Transverse colon (tissue), 4 donors: ENCODE measurements at regions of chr12 and their contacts with region 1.

Region 1: GRCh38 chr12:48973941-48974673 is 2.6 kb upstream of the WNT10B start:
- DNase-seq: no peak
- H3K4me3 ChIP-seq: no peak overlapping the region
- H3K27ac ChIP-seq: no peak overlapping the region
- H3K4me1 ChIP-seq: peaks cover 20 to 54% (median 45%) of the 10 kb centered on the region in 4 donors
- H3K27me3 ChIP-seq: peaks cover 97% of the 10 kb centered on the region
- CTCF ChIP-seq: peak; percentile 49 to 71 (median 58)
- EP300 ChIP-seq: no peak
- POLR2A ChIP-seq: no peak

Region 2: GRCh38 chr12:48954841-48955501 is 19.1 kb before region 1 on chr12:
- in situ Hi-C with region 1: no loop called
- intact Hi-C with region 1: loop called (anchors 1 kb)
- DNase-seq: no peak
- H3K4me3 ChIP-seq: no peak overlapping the region
- H3K27ac ChIP-seq: peak overlapping the region in 3 of 4 donors; percentile 83 to 94 (median 88)
- H3K4me1 ChIP-seq: peaks cover 6 to 34% (median 23%) of the 10 kb centered on the region in 4 donors
- H3K27me3 ChIP-seq: no peaks in the 10 kb centered on the region
- CTCF ChIP-seq: no peak
- EP300 ChIP-seq: no peak
- POLR2A ChIP-seq: no peak